SK-N-SH (cell line): ENCODE measurements at regions of chr1 and their contacts with region 1.

Region 1: DNA sequence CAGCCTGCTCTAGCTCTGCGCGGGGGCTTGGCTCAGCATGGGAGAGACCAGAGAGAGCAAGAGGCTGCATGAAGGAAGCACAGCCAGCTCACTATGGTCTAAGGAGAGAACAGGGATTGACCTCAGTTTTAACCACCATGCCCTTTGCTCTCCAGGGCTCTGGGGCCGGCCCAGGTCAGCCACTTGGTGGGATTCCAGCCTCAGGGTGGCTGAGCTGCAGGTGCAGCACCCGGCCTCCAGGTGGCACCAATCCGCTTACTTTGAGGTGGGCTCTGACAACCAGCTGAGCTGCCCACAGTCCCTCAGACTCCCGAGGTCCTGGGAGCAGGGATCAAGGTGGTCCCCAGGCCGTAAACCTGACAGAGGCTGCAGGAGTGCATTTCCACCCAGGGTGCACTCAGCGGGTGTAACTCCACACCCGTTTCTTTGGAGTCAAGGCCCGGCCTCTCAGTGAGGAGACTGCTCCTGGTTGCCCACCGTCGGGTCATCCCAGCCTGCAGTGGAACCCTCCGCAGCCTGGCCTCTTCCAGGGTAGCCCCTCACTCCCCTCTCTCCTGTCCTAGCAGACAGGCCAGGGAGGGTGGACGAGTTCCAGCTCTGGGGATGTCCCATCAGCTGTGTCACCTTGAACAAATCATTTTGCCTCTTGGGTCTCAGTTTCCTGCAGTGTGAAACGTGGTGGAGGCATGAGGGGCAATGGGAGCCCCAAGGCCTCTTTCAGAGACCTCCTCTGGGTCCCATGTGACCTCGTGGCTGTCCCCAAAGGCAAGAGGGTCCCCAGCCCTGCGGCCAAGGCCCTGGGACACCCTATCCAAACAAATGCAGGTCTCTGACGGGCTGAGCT is 607 bp upstream of the LGR6 start:
- DNase-seq: peak; percentile 89
- H3K4me3 ChIP-seq: no peak overlapping the region
- H3K27ac ChIP-seq: no peak overlapping the region
- H3K4me1 ChIP-seq: peaks cover 0 to 10% of the 10 kb centered on the region in 2 experiments; a peak in 1 of 4 replicates
- H3K27me3 ChIP-seq: peaks cover 28% of the 10 kb centered on the region
- CTCF ChIP-seq: peak; percentile 83
- EP300 ChIP-seq: no peak
- RAD21 ChIP-seq: peak; percentile 84

Region 2: DNA sequence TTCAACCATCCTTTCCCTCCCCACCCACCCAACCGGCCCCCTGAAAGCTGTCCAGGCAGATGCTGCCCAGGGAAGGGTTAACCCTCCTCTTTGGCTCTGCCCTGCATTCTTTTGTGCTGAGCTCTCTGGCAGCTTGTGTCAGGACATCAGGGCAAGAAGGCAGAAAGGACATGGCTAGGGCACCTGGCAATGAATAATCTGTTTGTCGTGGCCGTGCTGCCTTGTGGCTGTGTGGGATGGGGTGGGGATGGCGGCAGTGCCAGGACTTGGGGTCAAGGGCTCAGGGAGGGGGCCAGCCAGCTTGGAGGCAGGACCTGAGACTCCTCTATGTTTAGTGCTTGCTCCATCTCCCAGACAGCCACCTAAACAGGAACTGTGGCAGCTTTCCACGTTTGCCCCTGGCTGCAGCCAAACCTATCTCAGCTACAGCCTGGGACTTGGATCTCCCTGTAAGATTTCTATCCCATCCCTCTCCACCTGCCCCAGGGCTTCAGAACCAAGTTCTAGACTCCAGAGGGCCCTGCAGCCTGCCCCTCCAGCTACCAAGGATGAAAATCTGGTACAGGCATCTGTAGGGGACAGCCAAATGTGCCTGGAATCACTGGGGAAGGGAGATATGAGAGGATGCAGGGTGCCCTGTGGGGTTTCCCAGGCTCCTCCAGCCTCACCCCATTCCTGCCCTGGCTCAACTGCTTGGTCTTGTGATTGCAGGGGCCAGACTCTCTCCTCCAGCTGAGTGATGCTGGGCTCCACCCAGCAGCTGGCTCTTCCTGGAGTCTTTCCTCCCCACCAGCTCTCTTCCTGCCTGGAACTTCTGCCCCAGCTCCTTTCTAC is 79.9 kb before region 1 on chr1:
- CTCF ChIA-PET with region 1: no interaction called
- POLR2A ChIA-PET with region 1: no interaction called
- DNase-seq: no peak
- H3K4me3 ChIP-seq: no peak overlapping the region
- H3K27ac ChIP-seq: peak overlapping the region in 1 of 2 experiments; percentile 1; a peak in 1 of 4 replicates
- H3K4me1 ChIP-seq: peaks cover 6 to 12% of the 10 kb centered on the region in 2 experiments; a peak in 2 of 4 replicates
- H3K27me3 ChIP-seq: no peaks in the 10 kb centered on the region
- CTCF ChIP-seq: no peak
- EP300 ChIP-seq: no peak
- RAD21 ChIP-seq: no peak

Region 3: DNA sequence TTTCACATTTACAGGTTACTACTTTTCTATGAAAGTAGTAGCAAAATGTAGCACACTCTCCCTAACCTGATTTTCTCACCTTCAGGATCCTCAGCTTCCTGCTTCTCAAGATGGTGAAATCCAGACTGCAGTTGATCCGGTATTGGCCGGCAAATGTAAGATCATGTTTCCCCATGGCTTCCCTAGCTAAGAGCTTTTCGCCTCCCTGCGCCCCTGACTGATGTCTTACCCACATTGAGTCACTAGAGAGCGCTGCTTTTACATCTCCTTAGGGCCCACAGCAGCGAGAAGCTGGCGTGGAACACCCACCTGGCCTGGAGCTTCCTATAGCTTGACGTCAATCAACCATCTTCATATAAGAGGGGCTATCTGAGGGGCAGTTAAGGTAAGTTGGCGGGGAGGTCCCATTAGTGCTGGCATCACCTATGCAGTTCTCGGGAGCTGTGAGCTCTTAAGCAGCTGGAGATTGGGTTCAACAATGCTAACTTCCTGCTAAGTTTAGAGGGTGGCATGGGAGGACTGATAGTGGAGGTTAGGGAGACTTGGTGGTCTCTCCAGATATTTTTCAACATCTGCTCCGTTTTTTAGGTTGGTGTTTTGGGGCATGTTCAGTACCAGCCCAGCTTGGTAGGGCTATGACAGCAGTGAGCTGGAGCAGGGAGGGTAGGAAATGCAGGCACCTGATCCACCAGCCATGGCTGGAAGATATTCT is 38.1 kb before region 1 on chr1:
- CTCF ChIA-PET with region 1: interaction called, 20 read pairs
- POLR2A ChIA-PET with region 1: no interaction called
- DNase-seq: peak; percentile 62
- H3K4me3 ChIP-seq: no peak overlapping the region
- H3K27ac ChIP-seq: peak overlapping the region in 1 of 2 experiments; percentile 77; a peak in 2 of 4 replicates
- H3K4me1 ChIP-seq: peaks cover 9 to 25% of the 10 kb centered on the region in 2 experiments; a peak in 1 of 4 replicates
- H3K27me3 ChIP-seq: no peaks in the 10 kb centered on the region
- CTCF ChIP-seq: peak; percentile 56
- EP300 ChIP-seq: no peak
- RAD21 ChIP-seq: peak; percentile 57

Region 4: DNA sequence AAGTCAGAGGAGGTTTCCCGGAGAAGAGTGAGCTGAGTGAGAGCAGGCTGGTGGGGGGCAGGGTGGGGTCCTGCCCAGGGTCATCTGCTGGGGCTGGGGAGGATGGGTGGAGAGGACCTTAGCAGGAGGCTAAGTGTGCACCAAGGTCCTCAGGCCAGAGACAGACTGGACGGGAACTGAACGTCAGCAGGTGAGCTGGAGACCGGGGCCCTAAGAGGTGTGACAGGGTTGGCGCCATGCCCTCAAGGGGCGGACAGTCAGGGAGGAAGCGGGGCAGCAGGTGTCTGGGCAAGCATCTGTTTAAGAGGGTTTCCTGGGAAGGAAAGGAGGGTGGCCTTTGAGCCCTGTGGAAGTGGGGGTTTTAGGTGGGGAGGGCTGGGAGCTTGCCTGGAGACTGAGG is 19.0 kb before region 1 on chr1:
- CTCF ChIA-PET with region 1: interaction called, 27 read pairs
- POLR2A ChIA-PET with region 1: interaction called, 3 read pairs
- DNase-seq: no peak
- H3K4me3 ChIP-seq: no peak overlapping the region
- H3K27ac ChIP-seq: no peak overlapping the region
- H3K4me1 ChIP-seq: peaks cover 0 to 18% of the 10 kb centered on the region in 2 experiments; a peak in 1 of 4 replicates
- H3K27me3 ChIP-seq: no peaks in the 10 kb centered on the region; the same call in 1 of the 2 replicates
- CTCF ChIP-seq: no peak
- EP300 ChIP-seq: no peak
- RAD21 ChIP-seq: no peak

Region 5: DNA sequence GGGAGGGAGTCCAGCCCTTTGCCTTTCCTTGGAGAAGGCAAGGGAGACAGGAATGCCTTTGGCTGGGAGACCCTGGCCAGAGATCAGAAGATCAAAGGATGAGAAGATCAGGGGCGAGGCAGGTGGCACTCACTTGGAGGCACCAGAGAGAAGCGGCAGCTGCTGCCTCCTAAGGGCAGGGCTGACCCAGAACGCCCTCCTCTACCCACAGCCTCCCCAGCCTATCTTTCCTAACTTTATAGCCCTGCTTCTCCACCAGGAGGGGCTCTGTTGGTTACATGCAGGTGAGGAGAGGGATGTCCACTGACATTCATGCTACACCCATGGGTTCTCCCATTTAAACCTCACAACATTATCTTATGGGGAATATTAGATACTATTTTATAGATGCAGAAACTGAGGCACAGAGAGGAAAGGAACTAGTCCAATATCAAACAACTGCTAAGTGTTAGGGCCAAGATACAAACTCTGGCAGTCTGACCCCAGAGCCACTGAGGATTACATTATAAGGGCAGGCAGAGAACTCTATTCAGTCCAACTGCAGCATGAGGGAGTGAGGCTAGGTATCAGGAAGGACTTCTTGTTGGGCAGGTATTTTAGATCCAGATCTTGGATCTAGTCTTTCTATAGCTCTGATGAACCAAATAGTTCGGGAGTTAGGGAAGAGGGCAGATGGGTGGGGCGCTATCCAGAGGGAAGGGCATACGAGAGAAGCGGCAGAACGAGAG is 20.5 kb after region 1 on chr1:
- CTCF ChIA-PET with region 1: interaction called, 18 read pairs
- POLR2A ChIA-PET with region 1: no interaction called
- DNase-seq: peak; percentile 75
- H3K4me3 ChIP-seq: peak overlapping the region in 1 of 2 experiments; percentile 35; a peak in 2 of 4 replicates
- H3K27ac ChIP-seq: no peak overlapping the region
- H3K4me1 ChIP-seq: peaks cover 0 to 3% of the 10 kb centered on the region in 2 experiments; a peak in 1 of 4 replicates
- H3K27me3 ChIP-seq: peaks cover 66% of the 10 kb centered on the region
- CTCF ChIP-seq: peak; percentile 43
- EP300 ChIP-seq: no peak
- RAD21 ChIP-seq: peak; percentile 38

Region 6: GRCh38 chr1:202283379-202283844 is 90.4 kb after region 1 on chr1:
- CTCF ChIA-PET with region 1: interaction called, 10 read pairs
- POLR2A ChIA-PET with region 1: no interaction called
- DNase-seq: peak; percentile 49
- H3K4me3 ChIP-seq: no peak overlapping the region
- H3K27ac ChIP-seq: peak overlapping the region in 1 of 2 experiments; percentile 36; a peak in 2 of 4 replicates
- H3K4me1 ChIP-seq: peaks cover 36 to 44% of the 10 kb centered on the region in 2 experiments
- H3K27me3 ChIP-seq: no peaks in the 10 kb centered on the region
- CTCF ChIP-seq: no peak
- EP300 ChIP-seq: peak; percentile 48 to 94; a peak in 2 of 4 replicates
- RAD21 ChIP-seq: no peak

Region 7: GRCh38 chr1:202329891-202330290 is 136.9 kb after region 1 on chr1:
- CTCF ChIA-PET with region 1: interaction called, 13 read pairs
- POLR2A ChIA-PET with region 1: no interaction called
- DNase-seq: no peak
- H3K4me3 ChIP-seq: no peak overlapping the region
- H3K27ac ChIP-seq: no peak overlapping the region
- H3K4me1 ChIP-seq: no peaks in the 10 kb centered on the region
- H3K27me3 ChIP-seq: no peaks in the 10 kb centered on the region
- CTCF ChIP-seq: no peak
- EP300 ChIP-seq: no peak
- RAD21 ChIP-seq: no peak